ENCODE measurements at regions of chr12 and their contacts with region 1.

Region 1: DNA sequence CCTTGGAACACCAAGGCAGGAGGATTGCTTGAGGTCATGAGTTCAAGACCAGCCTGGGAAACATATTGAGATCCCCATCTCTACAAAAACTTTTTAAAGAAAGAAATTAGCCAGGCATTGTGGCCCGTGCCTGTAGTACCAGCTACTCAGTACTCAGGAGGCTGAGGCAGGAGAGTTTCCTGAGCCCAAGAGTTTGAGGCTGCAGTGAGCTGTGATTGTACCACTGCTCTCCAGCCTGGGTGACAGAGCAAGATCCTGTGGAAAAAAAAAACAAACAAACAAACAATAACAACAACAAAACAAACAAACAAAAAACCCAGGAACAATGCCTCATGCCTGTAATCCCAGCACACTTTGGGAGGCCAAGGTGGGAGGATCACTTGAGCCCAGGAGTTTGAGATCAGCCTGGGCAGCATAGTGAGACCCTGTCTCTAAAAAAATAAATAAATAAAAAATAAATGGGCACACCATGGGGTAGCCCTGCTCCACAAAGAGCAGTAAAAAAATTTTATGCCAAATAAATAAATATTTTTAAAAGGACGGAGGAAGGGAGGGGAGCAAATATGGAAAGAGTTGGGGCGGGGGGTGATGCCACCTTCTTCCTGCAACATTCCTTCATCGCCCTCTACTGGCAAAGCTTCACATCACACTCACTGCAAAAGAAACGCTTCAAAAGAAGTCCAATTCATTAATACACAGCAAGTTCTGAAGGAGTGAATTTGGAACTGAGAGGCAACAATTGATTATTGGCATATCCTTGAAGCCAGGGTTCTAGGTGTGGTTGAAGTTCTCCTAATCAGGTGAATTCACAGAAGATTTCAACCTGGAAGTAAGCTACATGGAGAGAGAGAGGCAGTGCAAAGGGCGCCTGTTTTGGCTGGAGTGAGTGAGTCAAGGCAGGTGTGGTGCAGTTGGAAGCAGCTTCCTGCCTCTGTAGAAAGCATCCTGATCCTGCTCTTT is 8.8 kb upstream of the GNPTAB start:
- DNase-seq: peak; percentile 51
- H3K4me3 Mint-ChIP-seq: no peak overlapping the region
- H3K27ac Mint-ChIP-seq: peak overlapping the region; percentile 71
- H3K4me1 Mint-ChIP-seq: peaks cover 8% of the 10 kb centered on the region
- H3K27me3 Mint-ChIP-seq: peaks cover 4% of the 10 kb centered on the region

Region 2: DNA sequence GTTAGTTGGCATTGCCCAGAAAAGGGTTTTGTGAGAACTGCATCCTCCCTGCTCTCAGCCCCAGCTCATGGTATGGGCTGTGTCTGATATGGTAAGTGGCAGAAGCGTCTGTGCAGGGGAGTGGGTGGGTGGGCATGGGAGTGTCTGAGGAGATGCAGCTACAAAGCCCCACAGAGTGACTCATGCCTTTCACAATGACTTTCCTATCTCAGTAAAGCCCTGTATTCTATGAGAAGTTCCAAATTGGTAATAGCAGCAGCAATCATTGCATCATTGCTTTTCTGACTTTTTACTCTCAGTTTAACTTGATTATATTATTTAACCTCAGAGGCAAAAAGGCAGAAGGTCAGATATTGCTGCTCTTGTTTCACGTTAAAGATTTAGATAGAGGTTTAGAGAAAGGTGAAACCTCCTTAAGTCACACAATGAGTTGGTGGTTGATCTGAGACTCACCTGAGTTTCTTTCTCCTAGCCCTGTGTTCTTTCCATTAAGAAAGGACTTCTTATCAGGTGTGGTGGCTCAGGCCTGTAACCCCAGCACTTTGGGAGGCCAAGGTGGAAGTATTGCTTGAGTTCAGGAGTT is 801.2 kb before region 1 on chr12:
- intact Hi-C with region 1: no loop called
- DNase-seq: no peak
- H3K4me3 Mint-ChIP-seq: no peak overlapping the region
- H3K27ac Mint-ChIP-seq: no peak overlapping the region
- H3K4me1 Mint-ChIP-seq: no peaks in the 10 kb centered on the region
- H3K27me3 Mint-ChIP-seq: no peaks in the 10 kb centered on the region

Region 3: DNA sequence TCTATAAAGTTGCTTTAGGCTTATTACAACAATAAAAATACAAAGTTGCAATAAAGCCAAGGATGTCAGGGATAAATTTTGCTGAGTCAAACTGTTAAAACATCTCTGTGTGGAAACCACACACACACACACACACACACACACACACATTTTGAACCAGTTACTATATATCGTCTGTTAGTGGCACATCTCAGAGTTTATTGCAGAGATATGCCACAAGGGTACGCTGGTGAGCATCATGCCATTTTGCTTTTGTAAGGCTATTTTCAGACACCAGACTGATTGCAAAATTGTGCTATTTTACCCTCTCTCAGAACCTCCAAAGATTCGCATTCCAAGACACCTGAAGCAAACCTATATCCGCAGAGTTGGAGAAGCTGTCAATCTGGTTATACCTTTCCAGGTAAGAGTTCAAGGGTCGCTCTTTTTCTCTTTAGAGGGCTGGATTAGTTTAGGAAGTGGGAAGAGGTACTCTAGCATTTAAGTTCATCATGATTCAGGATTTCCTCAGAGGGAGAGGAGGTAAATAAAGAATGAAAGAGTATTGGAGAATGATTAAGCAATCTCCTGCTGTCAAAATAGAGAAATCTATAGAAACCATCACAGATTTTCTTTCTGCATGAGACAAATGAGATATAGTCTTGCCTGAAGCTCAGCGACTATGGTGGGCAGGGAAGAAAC is 169.5 kb before region 1 on chr12:
- intact Hi-C with region 1: loop called (anchors 2 kb)
- DNase-seq: no peak
- H3K4me3 Mint-ChIP-seq: no peak overlapping the region
- H3K27ac Mint-ChIP-seq: no peak overlapping the region
- H3K4me1 Mint-ChIP-seq: peaks cover 9% of the 10 kb centered on the region
- H3K27me3 Mint-ChIP-seq: peaks cover 7% of the 10 kb centered on the region

Region 4: DNA sequence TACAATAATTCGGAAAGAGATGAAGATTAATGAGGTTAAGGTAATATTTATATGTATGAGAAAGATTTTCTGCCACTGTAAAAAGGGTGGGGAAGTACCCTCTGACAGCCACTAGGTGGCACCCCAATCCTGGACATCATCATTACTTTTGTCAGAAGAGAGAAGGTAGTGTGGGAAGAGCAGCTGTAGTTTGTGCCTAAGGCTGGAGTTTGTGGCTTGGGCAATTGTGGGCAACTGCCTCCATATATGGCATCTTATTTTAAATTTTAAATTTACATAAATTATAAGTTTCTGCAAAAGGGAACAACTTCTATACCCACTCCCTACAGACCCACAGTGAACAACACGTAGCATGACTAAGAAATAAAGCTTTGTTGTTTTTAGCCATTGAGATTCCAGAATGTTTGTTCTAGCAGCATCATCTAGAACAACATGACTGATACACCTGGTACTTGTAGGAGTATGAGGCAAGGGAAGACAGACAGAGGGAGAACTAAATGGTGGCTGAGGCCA is 65.9 kb before region 1 on chr12:
- intact Hi-C with region 1: loop called (anchors 1 kb)
- DNase-seq: peak; percentile 47
- H3K4me3 Mint-ChIP-seq: no peak overlapping the region
- H3K27ac Mint-ChIP-seq: peak overlapping the region; percentile 42
- H3K4me1 Mint-ChIP-seq: peaks cover 41% of the 10 kb centered on the region
- H3K27me3 Mint-ChIP-seq: no peaks in the 10 kb centered on the region

Region 5: GRCh38 chr12:101813117-101813516 is 26.5 kb before region 1 on chr12:
- intact Hi-C with region 1: no loop called
- DNase-seq: no peak
- H3K4me3 Mint-ChIP-seq: no peak overlapping the region
- H3K27ac Mint-ChIP-seq: no peak overlapping the region
- H3K4me1 Mint-ChIP-seq: peaks cover 35% of the 10 kb centered on the region
- H3K27me3 Mint-ChIP-seq: no peaks in the 10 kb centered on the region

Region 6: GRCh38 chr12:101925361-101925760 is 85.8 kb after region 1 on chr12:
- intact Hi-C with region 1: no loop called
- DNase-seq: no peak
- H3K4me3 Mint-ChIP-seq: no peak overlapping the region
- H3K27ac Mint-ChIP-seq: no peak overlapping the region
- H3K4me1 Mint-ChIP-seq: peaks cover 10% of the 10 kb centered on the region
- H3K27me3 Mint-ChIP-seq: no peaks in the 10 kb centered on the region

Measured in activated T-helper 1 cell treated with anti-CD3 and anti-CD28 coated beads, Interleukin-12 subunit alpha, Interleukin-12 subunit beta, Interleukin-2, Interleukin-4 antibody, amounts not matched to agents 30 ng/mL and 10 ng/mL and 1 ng/mL, durations not matched to agents 14 hours and 24 hours and 36 hours (primary cell).